Activated CD4-positive, alpha-beta T cell treated with anti-CD3 and anti-CD28 coated beads, Interleukin-2, amount 10 ng/mL, durations not matched to agents 24 days and 14 days (primary cell): ENCODE measurements at regions of chr1 and their contacts with region 1.

Region 1: GRCh38 chr1:223712194-223712849 is at the start of gene CAPN2:
- DNase-seq: peak; percentile 90
- H3K4me3 Mint-ChIP-seq: peak within 1 kb of the TSS; percentile 96
- H3K27ac Mint-ChIP-seq: peak within 1 kb of the TSS; percentile 87
- H3K4me1 Mint-ChIP-seq: peaks cover 66% of the 10 kb centered on the region
- H3K27me3 Mint-ChIP-seq: peaks cover 7% of the 10 kb centered on the region
- total RNA-seq, gene CAPN2: 69.6 and 73.1 TPM in 2 replicates

Region 2: DNA sequence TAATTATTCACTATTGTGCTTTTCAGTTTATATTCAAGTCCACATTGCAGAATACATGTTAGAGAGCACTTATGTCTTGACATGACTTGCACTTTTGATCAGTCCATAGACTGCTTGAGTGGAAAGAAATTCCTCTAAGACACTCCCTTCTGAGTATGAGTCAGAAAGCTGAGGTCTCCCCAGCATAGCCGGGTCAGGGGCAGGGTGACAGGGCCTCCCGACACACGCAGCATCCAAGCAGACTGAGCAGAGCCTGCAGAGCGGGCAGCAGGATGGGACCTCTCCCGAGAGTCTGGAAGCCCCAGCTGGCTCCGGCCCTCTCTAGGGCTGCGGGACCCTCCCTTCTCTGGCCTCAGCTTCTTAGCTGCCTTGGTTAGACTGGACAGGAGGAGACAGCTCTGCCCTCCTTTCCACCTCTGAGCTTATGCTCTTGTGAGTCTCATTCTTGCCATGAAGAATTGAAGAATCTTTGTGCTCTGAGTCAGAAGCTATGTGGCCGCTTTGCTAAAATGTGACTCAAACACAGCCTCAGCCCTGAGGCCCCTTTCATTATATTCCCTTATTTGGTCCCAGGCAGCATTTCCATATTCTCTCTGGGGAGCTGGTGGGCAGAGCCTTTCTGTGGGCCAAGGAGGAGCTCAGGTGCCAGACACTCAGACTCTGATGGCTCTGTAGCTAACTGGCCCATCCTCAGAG is 11.2 kb before region 1 on chr1:
- intact Hi-C with region 1: loop called (anchors 1 kb)
- DNase-seq: no peak
- H3K4me3 Mint-ChIP-seq: peak overlapping the region; percentile 67
- H3K27ac Mint-ChIP-seq: peak overlapping the region; percentile 91
- H3K4me1 Mint-ChIP-seq: peaks cover 51% of the 10 kb centered on the region
- H3K27me3 Mint-ChIP-seq: peaks cover 6% of the 10 kb centered on the region

Region 3: DNA sequence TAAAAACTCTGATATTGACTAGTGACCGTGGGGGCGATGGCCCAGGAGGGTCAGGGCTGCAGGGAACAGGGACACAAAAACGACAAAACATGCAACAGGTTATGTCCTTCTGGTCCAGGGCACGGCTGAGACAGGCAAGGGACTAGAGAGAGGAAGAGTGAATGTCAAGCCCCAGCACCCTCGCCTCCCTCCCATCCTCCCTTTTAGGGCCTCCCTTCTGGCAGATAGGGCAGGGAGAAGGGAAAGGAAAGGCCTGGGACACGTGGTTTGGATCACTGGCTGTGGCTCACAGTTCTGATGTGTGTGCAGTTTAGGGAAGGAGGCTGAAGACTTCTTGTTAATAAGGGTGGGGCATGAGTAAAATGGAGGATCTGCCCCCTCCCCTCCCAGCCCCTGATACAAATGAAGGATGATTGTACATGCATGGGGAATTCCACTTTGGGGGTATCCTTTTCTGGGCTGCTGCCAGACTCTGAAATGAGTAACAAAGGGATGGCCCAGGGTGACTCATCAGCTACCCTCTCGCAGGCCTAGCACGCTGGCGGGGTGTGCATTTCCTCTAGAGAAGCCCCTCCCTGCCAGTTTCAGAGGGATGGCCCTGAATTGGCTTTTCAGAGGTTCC is 14.2 kb after region 1 on chr1:
- intact Hi-C with region 1: loop called (anchors 1 kb)
- DNase-seq: peak; percentile 95
- H3K4me3 Mint-ChIP-seq: peak overlapping the region; percentile 80
- H3K27ac Mint-ChIP-seq: peak overlapping the region; percentile 96
- H3K4me1 Mint-ChIP-seq: peaks cover 65% of the 10 kb centered on the region
- H3K27me3 Mint-ChIP-seq: no peaks in the 10 kb centered on the region

Region 4: GRCh38 chr1:223748773-223749733 is 36.7 kb after region 1 on chr1:
- intact Hi-C with region 1: loop called (anchors 1 kb)
- DNase-seq: peak; percentile 91
- H3K4me3 Mint-ChIP-seq: peak overlapping the region; percentile 76
- H3K27ac Mint-ChIP-seq: no peak overlapping the region
- H3K4me1 Mint-ChIP-seq: peaks cover 17% of the 10 kb centered on the region
- H3K27me3 Mint-ChIP-seq: no peaks in the 10 kb centered on the region

Region 5: DNA sequence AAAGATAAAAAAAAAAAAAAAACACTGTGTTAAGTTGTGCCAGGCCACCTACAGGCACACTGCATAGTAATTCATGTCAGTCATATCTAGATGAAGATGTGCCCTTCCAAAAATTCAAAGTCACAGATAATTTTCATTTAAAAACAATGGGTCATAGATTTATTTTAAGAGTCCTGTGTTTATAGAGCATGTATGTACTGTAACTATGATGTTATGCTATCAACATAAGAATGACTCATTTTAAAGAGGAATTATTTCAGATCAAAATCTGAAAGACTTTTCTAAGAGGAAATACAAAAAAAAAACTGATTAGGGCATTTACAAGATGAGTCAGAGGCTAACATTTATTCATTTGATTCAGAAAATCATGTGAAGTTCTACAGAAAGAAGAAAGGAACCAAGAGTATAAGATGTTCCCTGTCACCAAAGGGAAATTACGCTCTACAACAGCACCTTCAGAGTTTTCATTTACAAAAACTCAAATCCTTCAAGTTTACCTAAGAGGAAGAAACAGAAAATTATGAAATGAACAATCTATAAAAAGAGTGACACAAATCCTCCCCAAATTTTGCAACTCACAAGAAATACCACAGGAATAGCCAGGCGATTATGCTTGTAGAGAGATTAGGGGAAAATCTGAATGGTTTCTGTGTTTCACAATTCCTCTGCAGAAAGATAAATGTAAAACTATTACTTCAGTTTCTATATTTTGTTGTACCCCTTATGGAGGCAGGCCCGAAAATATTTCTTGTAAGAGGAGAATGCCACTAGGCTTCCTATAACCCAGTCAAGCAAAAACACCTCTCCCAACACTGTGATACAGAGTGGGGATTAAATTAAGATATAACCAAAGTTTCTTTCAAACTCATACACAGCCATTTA is 119.7 kb after region 1 on chr1:
- intact Hi-C with region 1: loop called (anchors 5 kb)
- DNase-seq: no peak
- H3K4me3 Mint-ChIP-seq: peak overlapping the region; percentile 51
- H3K27ac Mint-ChIP-seq: peak overlapping the region; percentile 85
- H3K4me1 Mint-ChIP-seq: peaks cover 29% of the 10 kb centered on the region
- H3K27me3 Mint-ChIP-seq: no peaks in the 10 kb centered on the region

Region 6: DNA sequence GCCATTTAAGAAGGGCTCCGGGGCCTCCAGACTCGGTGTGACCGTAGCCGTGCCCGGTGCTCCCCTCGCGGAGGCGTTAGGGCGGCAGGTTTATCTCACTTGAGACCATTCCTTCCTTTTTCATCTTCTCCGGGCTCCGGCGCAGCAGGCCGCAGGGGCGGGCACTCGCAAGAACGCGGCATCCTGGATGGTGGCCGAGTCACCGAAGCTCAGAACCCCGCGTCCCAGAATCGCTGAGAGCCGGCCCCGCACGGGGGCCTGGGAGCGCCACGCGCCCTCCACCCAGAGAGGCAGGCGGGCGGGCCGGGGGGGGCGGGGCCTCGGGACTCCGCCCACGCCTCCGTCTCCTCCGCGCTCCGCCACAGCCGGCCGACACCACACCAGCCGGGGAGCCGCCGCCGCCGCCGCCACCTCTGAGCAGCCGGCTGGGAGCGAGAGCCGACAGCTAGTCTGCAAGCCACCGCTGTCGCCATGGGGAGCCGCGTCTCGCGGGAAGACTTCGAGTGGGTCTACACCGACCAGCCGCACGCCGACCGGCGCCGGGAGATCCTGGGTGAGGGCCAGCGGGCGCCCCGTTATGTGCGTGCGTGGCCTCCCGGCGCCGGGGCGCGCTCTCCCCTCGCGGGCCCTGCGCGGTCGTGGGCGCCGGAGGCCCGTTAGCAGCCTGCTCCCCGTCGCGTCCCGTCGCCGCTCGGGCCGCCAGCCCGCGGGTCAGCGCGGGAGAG is 470.7 kb after region 1 on chr1 and contains the start of gene DEGS1:
- intact Hi-C with region 1: loop called (anchors 10 kb)
- DNase-seq: peak; percentile 95
- H3K4me3 Mint-ChIP-seq: peak within 1 kb of the TSS; percentile 96
- H3K27ac Mint-ChIP-seq: peak within 1 kb of the TSS; percentile 97
- H3K4me1 Mint-ChIP-seq: peaks cover 45% of the 10 kb centered on the region
- H3K27me3 Mint-ChIP-seq: peaks cover 3% of the 10 kb centered on the region
- total RNA-seq, gene DEGS1: 51.8 and 56.3 TPM in 2 replicates